HepG2 (cell line): ENCODE measurements at regions of chr5 and their contacts with region 1.

Region 1: DNA sequence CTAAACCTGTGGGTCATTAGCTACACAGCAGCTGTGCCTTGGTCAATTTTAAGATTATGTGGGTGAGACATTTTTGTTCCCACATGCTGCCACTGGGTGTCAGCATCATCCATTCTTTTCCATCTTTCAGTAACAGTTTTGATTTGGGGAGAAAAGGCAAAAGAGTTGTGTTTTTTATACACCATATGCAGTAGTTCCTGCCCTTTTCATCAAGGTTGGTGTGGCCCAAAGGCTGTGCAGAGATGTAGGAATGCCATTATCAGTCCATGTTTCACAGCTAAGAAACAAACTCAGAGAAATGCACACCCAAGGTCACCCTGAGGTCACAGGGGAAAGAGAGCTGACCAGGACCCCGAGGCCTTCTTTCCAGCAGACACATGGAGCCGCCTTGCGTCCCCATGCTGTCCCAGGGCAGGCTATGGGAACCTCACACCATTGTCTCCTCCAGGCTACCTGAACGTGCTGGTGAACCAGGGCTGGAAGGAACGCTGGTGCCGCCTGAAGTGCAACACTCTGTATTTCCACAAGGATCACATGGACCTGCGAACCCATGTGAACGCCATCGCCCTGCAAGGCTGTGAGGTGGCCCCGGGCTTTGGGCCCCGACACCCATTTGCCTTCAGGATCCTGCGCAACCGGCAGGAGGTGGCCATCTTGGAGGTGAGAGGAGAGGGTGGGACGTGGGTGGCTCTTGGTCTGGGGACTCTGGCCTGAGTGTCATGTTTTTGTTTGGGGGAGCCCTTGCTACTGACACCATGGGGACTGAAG is 27.8 kb upstream of the GRPEL2 start:
- DNase-seq: peak; percentile 52
- ATAC-seq: no peak
- H3K4me3 ChIP-seq: peak overlapping the region in 1 of 3 experiments; percentile 5; a peak in 1 of 6 replicates
- H3K27ac ChIP-seq: no peak overlapping the region
- H3K4me1 ChIP-seq: peaks cover 34% of the 10 kb centered on the region
- H3K27me3 ChIP-seq: no peaks in the 10 kb centered on the region
- CTCF ChIP-seq: peak; percentile 84
- EP300 ChIP-seq: no peak
- POLR2A ChIP-seq: no peak
- RAD21 ChIP-seq: peak; percentile 63

Region 2: DNA sequence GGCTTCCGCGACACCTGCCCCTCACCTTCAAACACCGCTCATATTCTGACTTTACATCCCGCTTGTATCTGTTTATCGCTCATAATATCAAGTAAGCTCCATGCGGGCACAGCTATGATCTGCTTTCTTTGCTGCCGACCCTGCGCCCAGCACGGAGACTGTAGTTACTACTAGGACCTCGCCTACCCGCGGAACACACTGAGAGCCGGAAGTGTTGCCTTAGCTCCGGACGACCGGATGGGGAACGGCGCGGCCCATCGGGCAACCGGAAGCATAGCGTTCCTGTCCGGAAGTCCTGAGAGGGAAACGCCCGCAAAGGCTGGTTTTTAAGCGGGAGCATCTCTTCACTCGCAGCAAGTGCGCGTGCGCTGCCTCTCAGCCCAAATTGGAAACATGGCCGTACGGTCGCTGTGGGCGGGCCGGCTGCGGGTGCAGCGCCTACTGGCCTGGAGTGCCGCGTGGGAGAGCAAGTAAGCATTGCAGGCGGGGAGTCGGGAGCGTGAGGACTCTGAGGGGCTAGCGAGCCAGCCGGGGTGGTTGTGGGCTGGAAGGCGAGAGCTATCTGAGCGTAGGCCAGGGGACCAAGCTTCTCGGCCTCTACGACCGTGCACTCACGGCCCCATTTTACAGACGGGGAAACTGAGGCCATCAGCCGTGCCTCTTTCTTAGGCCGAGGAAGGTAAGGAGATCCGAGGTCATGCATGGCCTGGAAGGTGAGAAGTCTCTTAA is 27.8 kb after region 1 on chr5 and contains the start of gene GRPEL2:
- CTCF ChIA-PET with region 1: no interaction called
- POLR2A ChIA-PET with region 1: interaction called, 93 read pairs
- in situ Hi-C with region 1: no loop called
- intact Hi-C with region 1: loop called (anchors 2 kb)
- DNase-seq: peak; percentile 94
- ATAC-seq: peak; percentile 99
- H3K4me3 ChIP-seq: peak within 1 kb of the TSS; percentile 85 to 98 (median 91)
- H3K27ac ChIP-seq: peak within 1 kb of the TSS; percentile 74
- H3K4me1 ChIP-seq: peaks cover 50% of the 10 kb centered on the region
- H3K27me3 ChIP-seq: no peaks in the 10 kb centered on the region; a peak in 1 of 5 replicates
- CTCF ChIP-seq: 0 out of 2 replicates have a peak, but pooled peaks have one; percentile 22
- EP300 ChIP-seq: 0 out of 4 replicates have a peak, but pooled peaks of 1 of the 2 experiments have one; percentile 18
- POLR2A ChIP-seq: peak; percentile 78 to 90; a peak in 3 of 4 replicates
- RAD21 ChIP-seq: no peak; the same call in 1 of the 2 replicates
- total RNA-seq, gene GRPEL2: 16.6 and 28.4 TPM in 2 replicates

Region 3: DNA sequence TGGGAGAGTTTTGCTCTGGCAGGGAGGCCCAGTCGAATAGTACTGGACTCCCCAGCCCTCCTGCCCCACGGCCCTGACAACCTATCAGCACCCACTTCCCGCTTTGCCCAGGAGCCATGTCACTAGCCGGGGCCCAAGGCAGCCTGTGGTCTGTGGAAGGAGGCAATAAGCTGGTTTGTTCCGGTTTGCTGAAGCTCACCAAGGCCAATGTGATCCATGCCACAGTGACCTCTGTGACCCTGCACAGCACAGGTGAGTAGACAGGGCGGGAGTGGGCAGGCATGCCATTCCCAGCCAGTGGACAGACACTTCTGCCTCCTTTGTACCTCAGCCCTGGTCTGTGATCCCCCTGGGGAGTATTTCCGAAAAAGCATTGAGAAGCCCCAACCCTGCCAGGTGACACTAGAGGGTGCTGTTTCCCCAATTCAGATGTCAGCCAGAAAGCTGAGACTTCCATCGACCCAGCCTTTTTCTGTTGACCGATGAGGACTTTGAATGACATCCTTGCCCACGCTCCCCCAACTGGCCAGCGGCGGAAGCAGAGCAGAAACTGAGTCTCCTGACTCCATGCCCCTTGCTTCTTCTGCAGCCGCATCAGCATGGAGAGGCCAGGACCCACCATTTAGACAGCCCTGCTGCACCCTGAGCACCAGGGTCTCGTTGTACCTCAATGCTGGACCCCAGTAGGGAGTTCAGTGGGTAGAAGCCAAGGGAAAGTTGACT is 49.9 kb after region 1 on chr5:
- CTCF ChIA-PET with region 1: interaction called, 26 read pairs
- POLR2A ChIA-PET with region 1: interaction called, 13 read pairs
- in situ Hi-C with region 1: loop called (anchors 5 kb)
- intact Hi-C with region 1: loop called (anchors 1 kb)
- DNase-seq: peak; percentile 89
- ATAC-seq: peak; percentile 87
- H3K4me3 ChIP-seq: peak overlapping the region in 1 of 3 experiments; percentile 51; a peak in 4 of 6 replicates
- H3K27ac ChIP-seq: no peak overlapping the region
- H3K4me1 ChIP-seq: peaks cover 39% of the 10 kb centered on the region
- H3K27me3 ChIP-seq: no peaks in the 10 kb centered on the region; a peak in 1 of 5 replicates
- CTCF ChIP-seq: peak; percentile 94
- EP300 ChIP-seq: peak in 1 of 2 experiments; percentile 36; a peak in 1 of 4 replicates
- POLR2A ChIP-seq: no peak
- RAD21 ChIP-seq: peak; percentile 86

Region 4: GRCh38 chr5:149551200-149552037 is 234.0 kb after region 1 on chr5 and contains the start of gene CSNK1A1:
- CTCF ChIA-PET with region 1: no interaction called
- POLR2A ChIA-PET with region 1: interaction called, 19 read pairs
- in situ Hi-C with region 1: no loop called
- intact Hi-C with region 1: no loop called
- DNase-seq: peak; percentile 95
- ATAC-seq: peak; percentile 93
- H3K4me3 ChIP-seq: peak within 1 kb of the TSS; percentile 95 to 99 (median 98)
- H3K27ac ChIP-seq: peak within 1 kb of the TSS; percentile 97
- H3K4me1 ChIP-seq: peaks cover 35% of the 10 kb centered on the region
- H3K27me3 ChIP-seq: no peaks in the 10 kb centered on the region; a peak in 1 of 5 replicates
- CTCF ChIP-seq: peak; percentile 76
- EP300 ChIP-seq: peak in 1 of 2 experiments; percentile 58; a peak in 1 of 4 replicates
- POLR2A ChIP-seq: peak; percentile 86 to 88
- RAD21 ChIP-seq: peak; percentile 65
- total RNA-seq, gene CSNK1A1: 149 and 210 TPM in 2 replicates

Region 5: DNA sequence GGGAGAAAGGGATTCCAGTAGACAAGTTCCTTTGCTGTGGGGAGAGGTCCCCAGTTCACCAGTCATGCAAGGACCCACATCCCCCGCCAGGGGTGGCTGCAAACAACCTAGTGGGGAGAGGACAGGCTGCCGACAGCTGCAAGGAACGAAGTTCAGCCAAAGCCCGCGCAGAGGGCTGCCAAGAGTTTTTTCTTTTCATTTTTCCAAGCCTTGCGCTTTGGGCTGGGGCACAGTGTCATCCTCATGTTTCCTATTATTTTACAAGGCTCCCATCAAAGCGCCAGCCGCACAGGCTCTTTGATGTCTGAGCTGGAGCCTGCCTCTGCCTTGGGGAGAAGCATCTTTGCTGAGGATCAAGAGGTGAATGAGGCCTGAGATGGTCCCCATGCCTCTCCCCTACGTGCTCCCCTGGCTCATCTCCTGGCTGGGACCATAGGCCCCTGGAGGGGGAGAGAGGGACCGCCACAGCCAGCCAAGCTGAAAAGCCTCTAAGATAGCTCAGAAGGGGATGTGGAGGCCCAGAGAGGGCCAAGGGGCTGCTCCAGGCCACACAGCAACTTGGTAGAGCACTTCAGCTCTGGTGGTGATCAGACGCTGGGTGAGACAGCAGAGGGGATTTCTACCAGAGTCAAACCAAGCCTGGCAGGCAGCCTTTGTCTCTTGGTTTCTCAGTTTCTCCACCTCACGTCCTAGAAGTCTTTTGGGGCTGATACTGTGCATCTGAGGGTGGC is 1272.6 kb after region 1 on chr5:
- CTCF ChIA-PET with region 1: no interaction called
- POLR2A ChIA-PET with region 1: no interaction called
- in situ Hi-C with region 1: no loop called
- intact Hi-C with region 1: no loop called
- DNase-seq: peak; percentile 69
- ATAC-seq: peak; percentile 97
- H3K4me3 ChIP-seq: peak overlapping the region in 1 of 3 experiments; percentile 22; a peak in 1 of 6 replicates
- H3K27ac ChIP-seq: no peak overlapping the region
- H3K4me1 ChIP-seq: peaks cover 39% of the 10 kb centered on the region
- H3K27me3 ChIP-seq: peaks cover 0 to 26% of the 10 kb centered on the region in 2 experiments; a peak in 3 of 5 replicates
- CTCF ChIP-seq: peak; percentile 83
- EP300 ChIP-seq: no peak
- POLR2A ChIP-seq: no peak
- RAD21 ChIP-seq: peak; percentile 84